ENCODE measurements at regions of chr19 and their contacts with region 1.

Region 1: DNA sequence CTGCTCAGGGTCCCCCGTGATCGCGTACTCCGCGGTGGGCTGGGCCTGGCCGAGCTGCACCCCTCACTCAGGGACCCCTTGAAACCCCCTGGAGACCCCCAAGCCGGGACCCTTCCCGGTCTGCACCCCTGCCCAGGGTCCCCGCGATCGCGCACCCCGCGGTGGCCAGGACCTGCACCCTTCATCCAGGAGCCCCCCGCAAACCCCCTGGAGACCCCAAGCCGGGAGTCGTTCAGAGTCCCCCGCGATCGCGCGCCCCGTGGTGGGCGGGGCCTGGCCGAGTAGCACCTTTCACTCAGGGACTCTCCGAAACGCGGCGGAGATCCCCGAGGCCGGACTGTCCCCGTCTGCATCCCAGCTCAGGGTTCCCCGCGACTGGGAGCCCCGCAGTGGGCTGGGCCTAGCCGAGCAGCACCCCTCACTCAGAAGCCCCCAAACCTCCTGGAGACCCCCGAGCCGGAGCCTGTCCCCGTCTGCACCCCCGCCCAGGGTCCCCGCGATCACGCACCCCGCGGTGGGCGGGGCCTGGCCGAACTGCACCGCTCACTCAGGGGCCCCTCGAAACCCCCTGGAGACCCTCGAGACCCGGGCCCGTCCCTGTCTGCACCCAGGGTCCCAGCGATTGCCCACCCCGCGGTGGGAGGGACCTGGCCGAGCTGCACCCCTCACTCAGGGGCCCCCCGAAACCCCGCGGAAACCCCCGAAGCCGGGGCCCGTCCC is 748 bp downstream of the LMNB2 start:
- DNase-seq: peak in 1 of 2 experiments; percentile 36
- H3K4me3 ChIP-seq: peak overlapping the region; percentile 98
- H3K4me3 Mint-ChIP-seq: peak overlapping the region; percentile 69
- H3K27ac Mint-ChIP-seq: peak overlapping the region; percentile 56
- H3K4me1 ChIP-seq: peaks cover 5% of the 10 kb centered on the region; the same call in 1 of the 2 replicates
- H3K4me1 Mint-ChIP-seq: no peaks in the 10 kb centered on the region
- H3K27me3 ChIP-seq: no peaks in the 10 kb centered on the region
- H3K27me3 Mint-ChIP-seq: no peaks in the 10 kb centered on the region
- CTCF ChIP-seq: no peak

Region 2: DNA sequence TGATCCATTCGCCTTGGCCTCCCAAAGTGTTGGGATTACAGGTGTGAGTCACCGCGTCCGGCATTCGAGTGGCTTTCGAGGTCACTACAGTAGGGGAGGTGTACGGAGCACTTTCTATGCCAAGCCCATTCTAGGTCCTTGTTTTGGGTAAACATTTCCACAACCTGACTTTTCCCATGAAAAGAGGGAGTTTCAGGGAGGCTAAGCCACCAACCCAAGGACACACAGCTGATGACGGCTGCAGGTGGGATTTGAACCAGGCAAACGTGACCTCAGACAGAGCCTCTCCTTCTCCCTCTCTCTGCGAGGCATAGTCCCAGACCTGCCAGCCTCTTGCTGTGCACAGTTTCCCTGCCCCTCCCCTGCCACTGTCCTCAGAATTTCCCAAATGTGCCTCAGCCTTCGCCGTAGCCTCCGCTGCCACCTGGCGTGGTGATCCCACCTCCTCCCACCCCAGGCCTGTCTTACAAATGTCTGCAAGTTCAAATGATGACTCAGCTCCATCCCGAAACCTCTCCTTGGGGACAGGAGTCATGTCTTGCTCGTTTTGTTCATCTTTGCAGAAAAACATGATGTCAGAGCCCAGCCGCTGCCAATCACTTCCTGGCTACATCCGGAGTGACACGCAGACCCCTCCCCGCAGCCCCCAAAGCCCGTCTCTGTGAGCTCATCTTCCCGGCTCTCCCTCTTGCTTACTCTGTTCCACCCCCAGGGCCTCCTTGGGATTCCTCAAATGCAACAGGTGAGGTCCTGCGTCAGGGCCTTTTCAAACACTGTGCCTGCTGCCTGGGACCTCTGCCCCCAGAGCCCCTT is 13.3 kb after region 1 on chr19:
- CTCF ChIA-PET with region 1: no interaction called
- POLR2A ChIA-PET with region 1: interaction called, 10 read pairs
- intact Hi-C with region 1: no loop called
- DNase-seq: no peak
- H3K4me3 ChIP-seq: no peak overlapping the region
- H3K4me3 Mint-ChIP-seq: no peak overlapping the region
- H3K27ac Mint-ChIP-seq: peak overlapping the region; percentile 53
- H3K4me1 ChIP-seq: no peaks in the 10 kb centered on the region
- H3K4me1 Mint-ChIP-seq: no peaks in the 10 kb centered on the region
- H3K27me3 ChIP-seq: no peaks in the 10 kb centered on the region
- H3K27me3 Mint-ChIP-seq: no peaks in the 10 kb centered on the region
- CTCF ChIP-seq: no peak

Measured in Caco-2 (cell line).